Activated CD8-positive, alpha-beta T cell treated with anti-CD3 and anti-CD28 coated beads for 36 hours (primary cell): ENCODE measurements at regions of chr1 and their contacts with region 1.

Region 1: GRCh38 chr1:201982623-201983379 is at the start of gene RNPEP:
- DNase-seq: peak; percentile 65
- ATAC-seq: peak; percentile 82
- H3K4me3 Mint-ChIP-seq: peak within 1 kb of the TSS; percentile 92
- H3K27ac Mint-ChIP-seq: peak within 1 kb of the TSS; percentile 87
- H3K4me1 Mint-ChIP-seq: peaks cover 22% of the 10 kb centered on the region
- H3K27me3 Mint-ChIP-seq: no peaks in the 10 kb centered on the region
- CTCF ChIP-seq: no peak
- total RNA-seq, gene RNPEP: 37.8 to 39.5 TPM

Region 2: GRCh38 chr1:201970334-201971159 is 12.3 kb before region 1 on chr1:
- CTCF ChIA-PET with region 1: interaction called, 10 read pairs
- POLR2A ChIA-PET with region 1: interaction called, 9 read pairs
- intact Hi-C with region 1: no loop called
- DNase-seq: no peak
- ATAC-seq: no peak
- H3K4me3 Mint-ChIP-seq: no peak overlapping the region
- H3K27ac Mint-ChIP-seq: no peak overlapping the region
- H3K4me1 Mint-ChIP-seq: no peaks in the 10 kb centered on the region
- H3K27me3 Mint-ChIP-seq: no peaks in the 10 kb centered on the region
- CTCF ChIP-seq: no peak

Region 3: DNA sequence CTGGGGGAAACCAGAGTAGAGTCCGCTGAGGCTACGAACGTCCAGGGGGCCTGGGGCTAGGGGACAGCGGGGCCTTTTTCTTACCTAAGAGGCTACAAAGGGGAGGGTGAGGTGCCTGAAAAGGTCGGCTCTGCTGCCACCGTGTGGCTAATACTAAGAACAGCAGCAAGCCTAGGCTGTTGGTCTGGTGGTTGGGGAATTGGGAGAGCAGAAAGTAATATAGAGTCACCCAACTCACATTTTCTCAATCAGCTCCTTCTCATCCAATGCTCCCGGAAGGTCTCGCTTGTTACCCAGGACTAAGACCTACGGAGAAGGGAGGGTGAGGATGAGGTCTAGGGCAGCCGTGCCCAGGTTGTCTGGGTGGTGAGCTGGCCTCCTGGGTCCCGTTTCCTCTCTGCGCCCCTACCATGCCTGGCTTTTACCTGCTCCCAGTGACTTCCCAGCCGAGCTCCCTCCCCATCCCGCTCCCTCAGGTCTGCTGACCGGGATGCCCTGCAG is 152.5 kb after region 1 on chr1:
- CTCF ChIA-PET with region 1: no interaction called
- POLR2A ChIA-PET with region 1: no interaction called
- intact Hi-C with region 1: no loop called
- DNase-seq: peak; percentile 60
- ATAC-seq: peak; percentile 96
- H3K4me3 Mint-ChIP-seq: no peak overlapping the region
- H3K27ac Mint-ChIP-seq: no peak overlapping the region
- H3K4me1 Mint-ChIP-seq: no peaks in the 10 kb centered on the region
- H3K27me3 Mint-ChIP-seq: no peaks in the 10 kb centered on the region
- CTCF ChIP-seq: peak; percentile 90